ENCODE measurements at regions of chr12 and their contacts with region 1.

Region 1: DNA sequence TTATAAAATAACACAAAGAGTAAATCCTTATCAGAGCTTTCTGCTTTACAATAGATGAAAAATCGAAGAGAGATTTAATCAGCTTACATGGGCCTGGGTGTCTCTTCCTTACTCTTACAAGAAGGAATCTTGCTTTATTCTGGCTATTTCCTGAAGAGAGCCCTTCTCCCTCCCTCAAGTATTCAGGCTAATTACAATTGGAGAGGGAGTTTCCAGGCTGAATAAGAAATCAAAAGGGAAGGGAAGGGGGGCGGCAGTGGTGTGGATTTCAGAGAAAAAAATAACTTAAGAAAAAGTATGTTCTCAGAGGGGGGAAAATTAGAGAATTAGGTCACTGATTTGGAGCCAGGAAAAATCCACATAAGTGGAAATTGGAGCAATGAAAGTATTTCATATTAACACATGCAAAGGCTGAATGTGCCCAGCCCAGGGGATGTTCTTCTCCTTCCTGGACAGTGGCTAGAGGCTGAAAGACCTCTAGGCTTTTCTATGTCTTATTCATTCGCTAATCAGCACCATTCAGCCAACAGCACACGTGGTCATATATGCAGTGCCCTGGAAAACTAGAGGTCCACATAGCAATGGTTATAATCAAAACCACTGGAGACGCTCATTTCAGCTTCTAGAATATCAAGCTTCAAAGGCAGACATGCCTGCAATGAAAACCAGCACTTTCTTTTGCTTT is 158.9 kb upstream of the BTG1 start:
- DNase-seq: no peak
- ATAC-seq: no peak
- H3K4me3 Mint-ChIP-seq: no peak overlapping the region
- H3K27ac Mint-ChIP-seq: no peak overlapping the region
- H3K4me1 Mint-ChIP-seq: peaks cover 5% of the 10 kb centered on the region
- H3K27me3 Mint-ChIP-seq: no peaks in the 10 kb centered on the region
- CTCF ChIP-seq: no peak

Region 2: DNA sequence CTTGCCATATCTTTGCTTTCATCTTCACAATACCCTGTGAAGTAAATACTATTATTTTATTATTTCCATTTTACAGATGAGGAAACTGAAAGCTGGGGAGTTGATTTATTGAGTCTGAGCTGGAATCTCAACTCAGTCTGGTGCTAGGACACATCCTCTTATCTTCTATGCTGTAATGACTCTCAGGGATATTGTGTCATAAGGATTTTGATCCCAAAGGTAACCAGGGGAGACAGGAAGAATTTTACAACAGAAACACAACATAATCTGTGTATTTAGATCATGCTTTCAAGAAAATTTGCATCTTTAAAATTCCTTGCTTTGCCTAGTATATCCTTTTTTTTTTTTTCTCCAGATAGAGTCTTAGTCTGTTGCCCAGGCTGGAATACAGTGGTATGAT is 35.6 kb before region 1 on chr12:
- CTCF ChIA-PET with region 1: no interaction called
- POLR2A ChIA-PET with region 1: no interaction called
- intact Hi-C with region 1: loop called (anchors 5 kb)
- DNase-seq: no peak
- ATAC-seq: no peak
- H3K4me3 Mint-ChIP-seq: no peak overlapping the region
- H3K27ac Mint-ChIP-seq: no peak overlapping the region
- H3K4me1 Mint-ChIP-seq: no peaks in the 10 kb centered on the region
- H3K27me3 Mint-ChIP-seq: no peaks in the 10 kb centered on the region
- CTCF ChIP-seq: no peak